H1 (cell line): ENCODE measurements at regions of chr1 and their contacts with region 1.

Region 1: DNA sequence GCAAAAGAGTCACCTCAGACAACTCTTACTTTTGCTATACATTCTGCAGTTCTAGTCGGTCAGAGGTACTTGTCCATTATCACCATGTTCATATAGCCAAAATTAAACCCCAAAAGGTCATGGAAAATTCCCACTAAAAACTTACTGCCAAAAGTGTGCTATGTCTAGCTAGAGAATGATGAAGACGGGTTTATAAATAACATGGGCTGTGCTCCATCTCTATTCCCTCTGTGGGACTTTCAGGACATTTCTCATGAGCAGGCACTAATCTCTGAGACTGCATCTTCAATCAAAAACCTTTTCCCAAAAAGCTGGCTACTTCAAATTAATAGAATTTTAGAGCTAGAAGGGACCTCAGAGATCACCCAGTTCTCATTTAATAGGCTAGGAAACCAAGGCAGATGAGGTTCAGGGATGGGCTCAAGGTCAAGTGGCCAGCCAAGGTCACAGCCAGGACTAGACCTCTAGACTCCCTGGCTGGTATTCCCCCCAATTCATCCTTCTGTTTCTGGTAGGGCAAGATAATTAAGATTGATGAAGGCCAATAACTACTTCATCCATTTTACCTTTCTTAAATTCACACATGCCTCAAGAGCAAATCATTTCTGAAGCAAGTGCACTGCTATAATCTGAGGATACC is 21.0 kb upstream of the MOB3C start:
- DNase-seq: no peak
- H3K4me3 ChIP-seq: no peak overlapping the region
- H3K27ac ChIP-seq: no peak overlapping the region
- H3K4me1 ChIP-seq: no peaks in the 10 kb centered on the region
- H3K27me3 ChIP-seq: no peaks in the 10 kb centered on the region
- CTCF ChIP-seq: no peak
- EP300 ChIP-seq: no peak
- POLR2A ChIP-seq: no peak
- RAD21 ChIP-seq: no peak

Region 2: DNA sequence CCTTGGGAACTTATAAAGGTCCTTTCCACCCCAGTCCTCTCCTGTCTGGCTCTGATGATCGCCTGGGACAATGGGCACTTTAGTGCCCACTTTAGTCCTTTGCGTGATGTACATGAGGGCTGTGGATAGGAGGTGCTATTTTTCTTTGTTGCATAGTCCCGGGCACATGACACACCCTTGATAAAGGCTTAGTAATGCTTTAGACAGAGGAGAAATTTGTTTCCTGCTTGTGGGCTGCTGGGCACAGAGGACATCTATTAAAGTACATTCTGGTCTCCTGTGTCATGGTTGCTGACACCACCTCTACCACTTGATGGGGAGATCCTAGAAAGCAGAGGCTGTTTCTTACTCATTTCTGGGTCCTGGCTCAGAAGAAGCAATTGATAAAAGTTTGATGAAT is 80.7 kb before region 1 on chr1:
- CTCF ChIA-PET with region 1: no interaction called
- POLR2A ChIA-PET with region 1: no interaction called
- DNase-seq: no peak
- H3K4me3 ChIP-seq: no peak overlapping the region
- H3K27ac ChIP-seq: no peak overlapping the region
- H3K4me1 ChIP-seq: no peaks in the 10 kb centered on the region; a peak in 1 of 7 replicates
- H3K27me3 ChIP-seq: no peaks in the 10 kb centered on the region; a peak in 1 of 7 replicates
- CTCF ChIP-seq: no peak
- EP300 ChIP-seq: no peak
- POLR2A ChIP-seq: no peak
- RAD21 ChIP-seq: no peak

Region 3: GRCh38 chr1:46616277-46617107 is 21.1 kb before region 1 on chr1 and contains the start of gene MOB3C:
- CTCF ChIA-PET with region 1: interaction called, 78 read pairs
- POLR2A ChIA-PET with region 1: interaction called, 3 read pairs
- DNase-seq: peak in 1 of 2 experiments; percentile 72
- H3K4me3 ChIP-seq: peak within 1 kb of the TSS; percentile 47 to 83 (median 82)
- H3K27ac ChIP-seq: no peak within 1 kb of the TSS
- H3K4me1 ChIP-seq: peaks cover 11 to 32% (median 23%) of the 10 kb centered on the region in 4 experiments
- H3K27me3 ChIP-seq: peaks cover 0 to 11% (median 9%) of the 10 kb centered on the region in 4 experiments; a peak in 5 of 7 replicates
- CTCF ChIP-seq: no peak
- EP300 ChIP-seq: no peak
- POLR2A ChIP-seq: no peak
- RAD21 ChIP-seq: no peak
- total RNA-seq, gene MOB3C: 5.1 and 5.8 TPM in 2 replicates